Gastrocnemius medialis (tissue), 4 donors: ENCODE measurements at regions of chr2 and their contacts with region 1.

Region 1: DNA sequence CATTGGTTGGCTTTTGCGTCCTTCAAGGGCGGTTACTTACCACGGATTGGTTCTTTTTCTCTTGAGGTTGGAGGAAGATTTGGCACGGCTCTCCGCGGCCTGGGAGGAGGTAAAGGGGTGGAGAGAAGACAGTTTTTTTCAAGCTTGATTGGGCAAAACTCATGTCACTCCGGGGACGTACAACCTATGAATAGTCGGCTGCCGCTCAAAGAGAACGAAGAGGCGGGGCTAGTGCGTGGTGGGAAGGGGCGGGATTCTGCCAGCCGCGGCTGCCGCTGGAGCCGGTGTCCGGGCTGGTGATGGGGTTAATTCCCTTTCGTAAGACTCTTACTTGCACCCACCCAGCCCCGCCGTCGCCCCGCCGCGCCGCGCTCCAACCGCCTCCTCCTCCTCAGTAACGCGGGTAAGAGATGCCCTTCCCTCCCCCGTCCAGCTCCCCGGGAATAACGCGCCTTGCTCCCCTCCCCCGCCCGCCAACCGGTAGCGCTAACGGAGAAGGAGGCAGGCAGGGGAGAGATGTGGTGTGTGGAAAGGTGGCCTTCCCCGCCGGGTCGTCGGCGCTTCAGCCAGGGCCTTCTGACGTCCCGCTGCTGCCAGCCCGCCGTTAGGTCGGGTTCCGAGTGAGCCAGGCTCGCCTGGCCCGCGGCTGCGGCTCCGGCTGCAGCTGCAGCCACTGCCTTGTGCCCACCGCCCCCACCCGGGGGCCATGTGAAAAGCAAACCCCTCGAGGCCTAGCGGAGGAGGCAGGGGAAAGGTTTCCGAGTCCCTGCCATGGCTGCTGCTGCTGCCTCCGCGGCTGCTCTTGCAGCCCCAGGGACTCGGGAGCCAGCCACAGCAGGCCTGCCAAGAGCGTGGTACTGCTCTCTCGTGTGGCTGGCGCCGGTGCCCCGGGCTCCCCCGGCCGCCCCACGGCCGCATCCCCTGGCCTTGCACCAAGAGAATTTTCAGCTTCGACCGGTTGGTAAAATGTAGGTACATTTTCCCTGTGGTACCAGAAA is at the start of gene R3HDM1:
- DNase-seq: peak; percentile 100
- ATAC-seq: peak; percentile 90 to 95
- H3K4me3 ChIP-seq: peak within 1 kb of the TSS; percentile 75 to 89 (median 80)
- H3K27ac ChIP-seq: peak within 1 kb of the TSS; percentile 83 to 98 (median 92)
- H3K4me1 ChIP-seq: peaks cover 14 to 25% of the 10 kb centered on the region in 2 donors
- H3K27me3 ChIP-seq: no peaks in the 10 kb centered on the region
- CTCF ChIP-seq: peak in 1 of 5 experiments; percentile 8
- POLR2A ChIP-seq: peak; percentile 48 to 54
- total RNA-seq, gene R3HDM1: 13.5 to 35.7 (median 19.1) TPM

Region 2: GRCh38 chr2:134918526-134919340 is 612.8 kb before region 1 on chr2 and contains the start of gene CCNT2:
- in situ Hi-C with region 1: loop called in 1 of 4 experiments (anchors 10 kb)
- intact Hi-C with region 1: loop called (anchors 1 kb)
- DNase-seq: peak; percentile 97 to 99
- ATAC-seq: peak; percentile 86 to 89
- H3K4me3 ChIP-seq: peak within 1 kb of the TSS; percentile 96 to 99 (median 96)
- H3K27ac ChIP-seq: peak within 1 kb of the TSS; percentile 99 to 100 (median 100)
- H3K4me1 ChIP-seq: peaks cover 41 to 45% of the 10 kb centered on the region in 2 donors
- H3K27me3 ChIP-seq: no peaks in the 10 kb centered on the region
- CTCF ChIP-seq: peak in 3 of 5 experiments; percentile 22 to 34 (median 22)
- POLR2A ChIP-seq: peak; percentile 17 to 44
- total RNA-seq, gene CCNT2: 11.6 to 28.4 (median 18.6) TPM

Region 3: GRCh38 chr2:135494503-135494902 is 37.0 kb before region 1 on chr2:
- in situ Hi-C with region 1: no loop called
- intact Hi-C with region 1: loop called (anchors 1 kb)
- DNase-seq: peak in 1 of 2 donors; percentile 20
- ATAC-seq: peak; percentile 97 to 99
- H3K4me3 ChIP-seq: no peak overlapping the region
- H3K27ac ChIP-seq: peak overlapping the region; percentile 80 to 89 (median 85)
- H3K4me1 ChIP-seq: peaks cover 10 to 26% of the 10 kb centered on the region in 2 donors
- H3K27me3 ChIP-seq: no peaks in the 10 kb centered on the region
- CTCF ChIP-seq: no peak
- POLR2A ChIP-seq: no peak

Region 4: DNA sequence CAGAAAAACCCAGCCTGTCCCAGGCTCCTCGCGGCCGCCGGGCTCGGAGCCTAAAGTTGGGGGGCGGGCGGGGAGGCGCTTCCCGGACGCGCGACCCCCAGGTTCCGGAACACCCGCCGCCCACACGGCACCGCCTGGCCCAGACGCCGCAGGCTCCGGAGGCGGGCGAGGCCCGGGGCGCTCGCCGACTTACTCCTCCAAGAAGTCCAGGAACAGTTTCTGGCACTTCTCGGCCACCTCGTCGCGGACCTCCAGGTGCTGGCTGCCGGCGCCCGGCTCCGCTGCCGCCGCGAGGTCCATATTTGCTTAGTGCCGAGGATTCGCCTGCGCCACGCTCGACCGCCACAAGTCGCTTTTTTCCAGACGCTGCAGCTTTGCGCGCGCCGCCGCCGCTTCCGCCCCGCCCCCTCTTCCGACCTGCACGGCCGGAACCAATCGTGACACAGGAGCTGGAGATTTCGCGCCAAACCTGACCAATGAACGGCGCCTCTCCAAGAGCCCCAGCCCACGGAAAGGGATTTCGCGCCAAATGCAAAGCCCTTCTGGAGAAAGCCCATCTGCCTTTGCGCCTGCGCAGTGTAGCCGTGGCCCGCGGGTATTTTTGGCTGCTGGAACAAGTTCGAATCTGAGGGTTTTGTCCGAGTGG is 344.7 kb after region 1 on chr2 and contains the start of gene MCM6:
- in situ Hi-C with region 1: no loop called
- intact Hi-C with region 1: loop called (anchors 10 kb)
- DNase-seq: peak; percentile 95 to 97
- ATAC-seq: peak; percentile 98 to 100
- H3K4me3 ChIP-seq: peak within 1 kb of the TSS; percentile 74 to 93 (median 78)
- H3K27ac ChIP-seq: peak within 1 kb of the TSS; percentile 80 to 90 (median 87)
- H3K4me1 ChIP-seq: peaks cover 6 to 13% of the 10 kb centered on the region in 2 donors
- H3K27me3 ChIP-seq: no peaks in the 10 kb centered on the region
- CTCF ChIP-seq: peak in 3 of 5 experiments; percentile 10 to 46 (median 34)
- POLR2A ChIP-seq: peak; percentile 44 to 65
- total RNA-seq, gene MCM6: 4.2 to 6.3 (median 4.8) TPM